Left ventricle myocardium superior (tissue), 1 donor: ENCODE measurements at regions of chr3 and their contacts with region 1.

Region 1: DNA sequence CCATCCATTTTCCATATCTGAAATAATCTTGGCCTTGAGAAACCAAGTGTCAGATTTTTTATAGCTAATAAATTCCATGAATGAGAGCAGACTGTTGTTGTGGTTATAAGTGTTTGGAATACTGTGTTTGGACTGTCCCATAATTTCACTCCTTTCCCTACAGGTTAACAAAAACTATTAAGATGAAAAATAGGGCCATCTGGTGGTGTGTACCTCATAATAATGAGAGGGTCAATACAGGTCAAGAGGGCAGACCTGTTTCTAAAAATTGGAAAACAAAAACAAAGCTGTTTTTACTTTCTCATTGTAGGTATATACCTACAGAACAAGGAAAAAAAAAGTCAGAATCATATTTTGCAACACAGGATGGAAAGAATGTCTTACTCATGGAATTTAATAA is 553.8 kb upstream of the SGO1 start:
- DNase-seq: no peak
- ATAC-seq: peak; percentile 61

Region 2: DNA sequence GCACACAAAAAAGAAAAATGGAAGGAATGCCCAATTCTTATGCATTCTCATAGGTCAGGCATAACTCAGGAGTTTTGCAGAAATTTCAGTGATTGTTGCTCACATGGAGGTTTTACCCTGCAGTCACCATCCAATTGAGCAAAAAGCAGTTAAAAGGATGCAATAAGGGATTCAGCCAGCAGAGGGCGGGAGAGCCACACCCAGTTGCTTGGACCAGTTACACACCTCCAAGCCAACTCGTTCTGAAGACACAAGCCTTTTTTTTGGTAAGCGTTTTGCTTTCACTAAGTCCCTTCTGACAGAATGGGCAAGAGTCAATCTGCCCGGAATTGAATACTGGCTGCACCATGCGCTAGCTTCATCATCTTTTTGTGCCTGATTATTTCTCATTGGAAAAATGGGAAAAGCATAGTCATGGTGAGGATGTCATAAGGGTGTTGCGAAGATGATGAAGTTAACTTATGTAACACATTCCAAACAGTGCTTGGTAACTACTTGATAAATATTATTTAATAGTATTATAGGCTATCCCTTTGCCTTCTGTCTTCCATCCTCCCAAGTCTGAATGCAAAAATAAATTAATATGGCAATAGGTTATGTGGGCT is 399.4 kb before region 1 on chr3:
- intact Hi-C with region 1: loop called (anchors 10 kb)
- DNase-seq: peak; percentile 55
- ATAC-seq: peak; percentile 63